ENCODE measurements at regions of chr1 and their contacts with region 1.

Region 1: GRCh38 chr1:99849744-99850458 is at the start of gene AGL:
- DNase-seq: peak; percentile 85
- H3K4me3 ChIP-seq: peak within 1 kb of the TSS; percentile 80 to 99 (median 97)
- H3K27ac ChIP-seq: peak within 1 kb of the TSS; percentile 26
- H3K4me1 ChIP-seq: peaks cover 7% of the 10 kb centered on the region
- H3K27me3 ChIP-seq: no peaks in the 10 kb centered on the region
- CTCF ChIP-seq: no peak
- POLR2A ChIP-seq: peak; percentile 93
- total RNA-seq, gene AGL: 10.5 and 10.7 TPM in 2 replicates

Region 2: GRCh38 chr1:99772809-99773208 is 77.1 kb before region 1 on chr1:
- CTCF ChIA-PET with region 1: no interaction called
- POLR2A ChIA-PET with region 1: no interaction called
- dilution Hi-C with region 1: no loop called
- intact Hi-C with region 1: no loop called
- DNase-seq: no peak
- H3K4me3 ChIP-seq: no peak overlapping the region
- H3K27ac ChIP-seq: no peak overlapping the region
- H3K4me1 ChIP-seq: no peaks in the 10 kb centered on the region
- H3K27me3 ChIP-seq: peaks cover 0 to 5% of the 10 kb centered on the region in 2 experiments
- CTCF ChIP-seq: no peak
- POLR2A ChIP-seq: no peak

Region 3: GRCh38 chr1:99969729-99970621 is 120.1 kb after region 1 on chr1 and contains the start of gene SLC35A3:
- CTCF ChIA-PET with region 1: no interaction called
- POLR2A ChIA-PET with region 1: no interaction called
- dilution Hi-C with region 1: no loop called
- intact Hi-C with region 1: loop called (anchors 5 kb)
- DNase-seq: peak; percentile 68
- H3K4me3 ChIP-seq: peak within 1 kb of the TSS; percentile 62 to 91 (median 69)
- H3K27ac ChIP-seq: peak within 1 kb of the TSS; percentile 25
- H3K4me1 ChIP-seq: peaks cover 11% of the 10 kb centered on the region
- H3K27me3 ChIP-seq: no peaks in the 10 kb centered on the region
- CTCF ChIP-seq: no peak
- POLR2A ChIP-seq: no peak
- total RNA-seq, gene SLC35A3: 19.0 and 20.2 TPM in 2 replicates